AG04449 (cell line): ENCODE measurements at regions of chr6 and their contacts with region 1.

Region 1: DNA sequence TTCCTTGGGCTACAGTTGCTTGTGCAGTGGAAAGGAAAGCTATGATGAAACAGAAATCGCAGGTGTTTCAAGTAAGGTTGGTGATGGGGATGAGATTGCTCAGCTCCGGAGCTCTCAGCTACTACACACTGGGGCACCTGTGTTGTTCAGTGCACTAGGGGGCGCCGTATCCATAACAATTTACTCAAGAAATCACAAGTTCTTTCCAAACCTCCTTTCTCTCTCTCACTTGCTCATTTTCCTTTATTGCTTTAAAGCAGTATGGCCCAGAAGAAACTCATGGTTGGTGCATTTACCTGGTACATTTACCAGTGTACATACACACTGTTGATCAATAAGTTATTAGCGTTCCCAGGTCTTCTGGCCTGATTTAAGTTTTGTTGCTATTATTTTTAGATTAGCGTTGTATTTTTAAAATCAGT is 235.2 kb upstream of the TAB2 start:
- DNase-seq: no peak
- H3K4me3 ChIP-seq: no peak overlapping the region
- CTCF ChIP-seq: peak; percentile 77

Region 2: DNA sequence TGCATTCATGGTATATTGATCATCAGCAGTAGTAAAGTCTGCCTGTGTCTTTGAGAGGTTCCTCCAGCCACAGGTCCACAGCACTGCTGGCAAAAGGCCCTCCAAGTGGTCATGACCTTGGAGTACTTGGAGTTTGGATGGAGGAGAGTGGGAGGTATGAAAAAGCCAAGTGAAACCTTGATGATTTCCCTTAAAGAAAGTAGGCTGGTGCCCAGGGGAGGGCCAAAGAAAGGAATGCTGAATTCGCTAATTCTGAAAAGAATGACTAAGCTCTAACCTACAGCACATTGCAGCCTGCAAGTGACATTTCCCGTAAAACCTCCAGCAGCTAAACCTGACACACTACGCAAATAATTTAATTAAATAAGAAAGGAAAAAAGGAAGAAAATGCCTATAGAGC is 11.9 kb after region 1 on chr6:
- CTCF ChIA-PET with region 1: interaction called, 23 read pairs
- POLR2A ChIA-PET with region 1: interaction called, 4 read pairs
- DNase-seq: no peak
- H3K4me3 ChIP-seq: no peak overlapping the region
- CTCF ChIP-seq: no peak